Lower leg skin (tissue), 4 donors: ENCODE measurements at regions of chr3 and their contacts with region 1.

Region 1: DNA sequence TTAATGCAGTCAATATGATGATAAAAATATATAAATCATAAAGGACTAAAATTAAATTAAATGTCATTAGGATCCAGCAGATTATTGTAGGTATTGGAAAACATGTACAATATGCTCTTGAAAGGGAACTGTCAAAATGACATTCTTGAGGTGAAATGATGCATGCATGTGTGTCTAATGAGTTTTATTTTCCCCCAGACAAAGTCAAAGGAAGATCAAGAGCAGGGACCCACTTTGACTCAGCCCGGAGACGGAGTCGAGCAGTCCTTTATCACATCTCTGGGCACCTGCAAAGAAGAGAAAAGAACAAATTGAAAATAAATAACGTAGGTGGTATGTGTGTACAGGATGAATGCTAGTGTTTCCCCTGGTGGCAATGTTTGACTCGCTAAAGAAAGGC is 194.1 kb downstream of the KCNH8 start:
- DNase-seq: no peak
- H3K4me3 ChIP-seq: no peak overlapping the region
- CTCF ChIP-seq: no peak
- POLR2A ChIP-seq: no peak

Region 2: GRCh38 chr3:18988614-18989229 is 353.7 kb before region 1 on chr3:
- intact Hi-C with region 1: no loop called
- DNase-seq: no peak
- H3K4me3 ChIP-seq: no peak overlapping the region
- CTCF ChIP-seq: no peak
- POLR2A ChIP-seq: no peak

Region 3: DNA sequence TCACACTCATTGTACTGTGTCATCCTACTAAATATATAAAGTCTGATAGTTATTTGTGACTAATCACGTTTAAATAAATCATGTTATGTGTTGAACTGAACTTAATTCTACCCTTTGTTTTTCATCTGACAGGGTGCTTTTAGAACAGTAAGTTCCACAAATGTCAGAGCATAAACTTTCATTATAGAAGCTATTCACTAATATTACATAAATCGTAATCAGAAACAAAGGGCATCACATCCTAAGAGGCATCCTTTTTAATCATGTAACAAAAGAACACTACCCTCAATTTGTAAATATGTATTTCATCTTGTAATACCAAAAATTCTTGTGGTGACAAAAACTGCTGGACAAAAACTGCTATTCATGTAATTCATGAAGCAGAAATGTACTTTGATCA is 143.3 kb before region 1 on chr3:
- intact Hi-C with region 1: loop called (anchors 2 kb)
- DNase-seq: no peak
- H3K4me3 ChIP-seq: no peak overlapping the region
- CTCF ChIP-seq: no peak
- POLR2A ChIP-seq: no peak

Region 4: DNA sequence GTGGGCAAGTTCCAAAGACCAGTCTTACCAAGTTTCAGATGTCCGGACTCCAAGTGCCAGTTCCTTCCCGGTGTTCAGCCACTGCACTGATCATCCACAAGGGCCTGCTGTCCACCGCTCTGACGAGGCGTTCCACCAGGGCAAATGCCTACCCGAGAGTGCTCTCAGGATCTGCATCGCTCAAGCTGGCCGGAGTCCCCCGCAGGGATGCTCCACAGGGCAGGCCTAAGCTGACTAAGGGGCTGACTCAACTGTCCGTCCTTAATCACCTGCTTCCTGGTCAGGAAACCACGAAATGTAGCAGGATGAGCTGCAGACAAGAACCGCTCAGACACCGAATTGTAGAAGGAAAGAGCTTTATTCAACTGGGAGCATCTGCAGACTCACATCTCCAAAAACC is 147.5 kb after region 1 on chr3:
- intact Hi-C with region 1: no loop called
- DNase-seq: no peak
- H3K4me3 ChIP-seq: no peak overlapping the region
- CTCF ChIP-seq: no peak
- POLR2A ChIP-seq: no peak

Region 5: GRCh38 chr3:19757773-19758172 is 415.4 kb after region 1 on chr3:
- intact Hi-C with region 1: no loop called
- DNase-seq: no peak
- H3K4me3 ChIP-seq: no peak overlapping the region
- CTCF ChIP-seq: no peak
- POLR2A ChIP-seq: no peak